ENCODE measurements at regions of chr9 and their contacts with region 1.

Region 1: DNA sequence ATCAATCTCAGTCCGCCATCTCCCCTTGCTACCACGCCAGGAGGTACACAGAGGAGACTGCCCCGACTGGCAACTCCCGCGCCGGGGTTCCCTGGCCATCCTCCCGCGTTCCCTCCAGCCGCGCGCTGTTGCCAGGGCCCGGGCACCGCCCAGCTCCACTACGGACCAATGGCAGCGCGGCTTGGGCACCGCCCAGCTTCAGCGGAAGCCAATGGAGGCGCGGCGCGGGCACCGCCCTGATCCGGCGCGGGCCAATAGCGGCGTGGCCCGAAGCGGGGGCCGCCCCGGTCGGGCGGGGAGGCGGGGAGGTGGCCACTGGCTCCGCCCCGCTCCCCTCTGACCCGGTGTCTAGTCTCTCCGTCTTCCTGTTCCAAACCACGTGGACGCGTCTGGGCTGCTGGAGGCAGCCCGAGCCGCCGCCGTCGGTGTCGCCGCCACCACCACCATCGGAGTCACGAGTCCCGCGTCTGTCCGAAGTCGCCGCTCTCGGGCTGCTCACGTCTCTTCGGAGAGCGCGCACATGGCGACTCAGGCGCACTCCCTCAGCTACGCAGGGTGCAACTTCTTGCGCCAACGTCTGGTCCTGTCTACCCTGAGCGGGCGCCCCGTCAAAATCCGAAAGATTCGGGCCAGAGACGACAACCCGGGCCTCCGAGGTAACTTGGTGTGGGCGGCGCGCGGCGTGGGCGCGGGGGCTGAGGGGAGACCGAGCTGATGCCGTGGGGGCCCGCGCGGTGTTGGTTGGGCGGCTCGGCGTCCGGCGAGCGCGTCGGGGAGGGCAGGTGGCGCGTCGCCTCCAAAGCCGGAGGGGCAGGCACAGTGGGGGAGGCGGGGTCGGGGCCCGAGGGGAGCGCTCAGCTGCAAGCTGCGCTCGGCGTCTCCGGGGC is at the start of gene RCL1:
- DNase-seq: peak; percentile 97
- ATAC-seq: peak; percentile 91
- H3K4me3 ChIP-seq: peak within 1 kb of the TSS; percentile 81 to 96 (median 94)
- H3K4me3 Mint-ChIP-seq: peak within 1 kb of the TSS; percentile 98
- H3K27ac ChIP-seq: peak within 1 kb of the TSS; percentile 89 to 97
- H3K27ac Mint-ChIP-seq: peak within 1 kb of the TSS; percentile 97
- H3K4me1 ChIP-seq: peaks cover 22 to 30% of the 10 kb centered on the region in 2 donors
- H3K4me1 Mint-ChIP-seq: peaks cover 36% of the 10 kb centered on the region
- H3K27me3 ChIP-seq: no peaks in the 10 kb centered on the region
- H3K27me3 Mint-ChIP-seq: peaks cover 1% of the 10 kb centered on the region
- CTCF ChIP-seq: no peak
- total RNA-seq, gene RCL1: 21.7 and 29.6 TPM in 2 replicates

Region 2: GRCh38 chr9:3525836-3526164 is 1267.0 kb before region 1 on chr9 and contains the start of gene RFX3:
- CTCF ChIA-PET with region 1: no interaction called
- POLR2A ChIA-PET with region 1: no interaction called
- intact Hi-C with region 1: loop called (anchors 5 kb)
- DNase-seq: peak; percentile 95
- ATAC-seq: peak; percentile 67
- H3K4me3 ChIP-seq: peak within 1 kb of the TSS; percentile 84 to 99 (median 95)
- H3K4me3 Mint-ChIP-seq: peak within 1 kb of the TSS; percentile 100
- H3K27ac ChIP-seq: peak within 1 kb of the TSS; percentile 100
- H3K27ac Mint-ChIP-seq: peak within 1 kb of the TSS; percentile 100
- H3K4me1 ChIP-seq: peaks cover 17 to 35% of the 10 kb centered on the region in 2 donors
- H3K4me1 Mint-ChIP-seq: peaks cover 48% of the 10 kb centered on the region
- H3K27me3 ChIP-seq: no peaks in the 10 kb centered on the region
- H3K27me3 Mint-ChIP-seq: no peaks in the 10 kb centered on the region
- CTCF ChIP-seq: no peak
- total RNA-seq, gene RFX3: 37.2 and 39.1 TPM in 2 replicates

Region 3: GRCh38 chr9:4679268-4680172 is 113.3 kb before region 1 on chr9 and contains the start of gene CDC37L1:
- CTCF ChIA-PET with region 1: no interaction called
- POLR2A ChIA-PET with region 1: interaction called, 7 read pairs
- intact Hi-C with region 1: loop called (anchors 1 kb)
- DNase-seq: peak; percentile 98
- ATAC-seq: peak; percentile 95
- H3K4me3 ChIP-seq: peak within 1 kb of the TSS; percentile 58 to 97 (median 72)
- H3K4me3 Mint-ChIP-seq: no peak within 1 kb of the TSS
- H3K27ac ChIP-seq: peak within 1 kb of the TSS; percentile 89 to 93
- H3K27ac Mint-ChIP-seq: no peak within 1 kb of the TSS
- H3K4me1 ChIP-seq: peaks cover 17 to 20% of the 10 kb centered on the region in 2 donors
- H3K4me1 Mint-ChIP-seq: peaks cover 3% of the 10 kb centered on the region
- H3K27me3 ChIP-seq: no peaks in the 10 kb centered on the region
- H3K27me3 Mint-ChIP-seq: no peaks in the 10 kb centered on the region
- CTCF ChIP-seq: peak; percentile 72
- total RNA-seq, gene CDC37L1: 16.0 and 19.3 TPM in 2 replicates

Region 4: DNA sequence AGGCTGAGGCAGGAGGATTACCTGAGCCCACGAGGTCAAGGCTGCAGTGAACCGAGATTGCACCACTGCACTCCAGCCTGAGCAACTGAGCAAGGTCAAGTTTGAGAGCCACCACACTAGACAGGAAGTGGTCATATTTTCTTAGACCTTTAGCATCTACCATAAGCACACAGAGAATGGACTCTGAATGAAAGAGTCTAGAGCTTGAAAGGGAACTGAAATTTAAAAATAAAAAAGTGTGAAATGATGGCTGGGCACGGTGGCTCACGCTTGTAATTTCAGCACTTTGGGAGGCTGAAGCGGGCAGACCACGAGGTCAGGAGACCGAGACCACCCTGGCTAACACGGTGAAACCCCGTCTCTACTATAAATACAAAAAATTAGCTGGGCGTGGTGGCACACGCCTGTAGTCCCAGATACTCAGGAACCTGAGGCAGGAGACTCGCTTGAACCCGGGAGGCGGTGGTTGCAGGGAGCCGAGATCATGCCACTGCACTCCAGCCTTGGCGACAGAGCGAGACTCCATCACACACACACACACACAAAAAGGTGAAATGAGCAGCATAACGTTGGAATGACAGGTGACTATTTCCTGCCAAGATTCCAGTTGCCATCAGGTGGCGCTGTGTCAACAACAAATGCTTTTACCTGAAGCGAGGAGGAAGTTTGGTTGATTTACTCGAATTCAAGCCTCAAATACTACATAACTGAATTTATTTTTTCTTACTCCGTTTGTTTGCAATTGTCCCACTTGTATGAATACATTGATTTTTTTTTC is 30.5 kb before region 1 on chr9:
- CTCF ChIA-PET with region 1: interaction called, 16 read pairs
- POLR2A ChIA-PET with region 1: interaction called, 3 read pairs
- intact Hi-C with region 1: loop called (anchors 1 kb)
- DNase-seq: peak; percentile 87
- ATAC-seq: peak; percentile 73
- H3K4me3 ChIP-seq: peak overlapping the region; percentile 22 to 62 (median 56)
- H3K4me3 Mint-ChIP-seq: peak overlapping the region; percentile 82
- H3K27ac ChIP-seq: peak overlapping the region in 1 of 2 donors; percentile 28
- H3K27ac Mint-ChIP-seq: peak overlapping the region; percentile 17
- H3K4me1 ChIP-seq: peaks cover 10 to 20% of the 10 kb centered on the region in 2 donors
- H3K4me1 Mint-ChIP-seq: peaks cover 22% of the 10 kb centered on the region
- H3K27me3 ChIP-seq: no peaks in the 10 kb centered on the region
- H3K27me3 Mint-ChIP-seq: no peaks in the 10 kb centered on the region
- CTCF ChIP-seq: peak; percentile 89

Region 5: GRCh38 chr9:4828761-4829160 is 35.9 kb after region 1 on chr9:
- CTCF ChIA-PET with region 1: no interaction called
- POLR2A ChIA-PET with region 1: no interaction called
- intact Hi-C with region 1: no loop called
- DNase-seq: no peak
- ATAC-seq: no peak
- H3K4me3 ChIP-seq: no peak overlapping the region
- H3K4me3 Mint-ChIP-seq: no peak overlapping the region
- H3K27ac ChIP-seq: no peak overlapping the region
- H3K27ac Mint-ChIP-seq: no peak overlapping the region
- H3K4me1 ChIP-seq: no peaks in the 10 kb centered on the region
- H3K4me1 Mint-ChIP-seq: no peaks in the 10 kb centered on the region
- H3K27me3 ChIP-seq: no peaks in the 10 kb centered on the region
- H3K27me3 Mint-ChIP-seq: no peaks in the 10 kb centered on the region
- CTCF ChIP-seq: no peak

Region 6: GRCh38 chr9:5042641-5043277 is 249.9 kb after region 1 on chr9:
- CTCF ChIA-PET with region 1: no interaction called
- POLR2A ChIA-PET with region 1: no interaction called
- intact Hi-C with region 1: no loop called
- DNase-seq: no peak
- ATAC-seq: no peak
- H3K4me3 ChIP-seq: peak overlapping the region in 1 of 5 experiments; percentile 43
- H3K4me3 Mint-ChIP-seq: peak overlapping the region; percentile 34
- H3K27ac ChIP-seq: no peak overlapping the region
- H3K27ac Mint-ChIP-seq: no peak overlapping the region
- H3K4me1 ChIP-seq: no peaks in the 10 kb centered on the region
- H3K4me1 Mint-ChIP-seq: peaks cover 5% of the 10 kb centered on the region
- H3K27me3 ChIP-seq: no peaks in the 10 kb centered on the region
- H3K27me3 Mint-ChIP-seq: no peaks in the 10 kb centered on the region
- CTCF ChIP-seq: no peak

Region 7: DNA sequence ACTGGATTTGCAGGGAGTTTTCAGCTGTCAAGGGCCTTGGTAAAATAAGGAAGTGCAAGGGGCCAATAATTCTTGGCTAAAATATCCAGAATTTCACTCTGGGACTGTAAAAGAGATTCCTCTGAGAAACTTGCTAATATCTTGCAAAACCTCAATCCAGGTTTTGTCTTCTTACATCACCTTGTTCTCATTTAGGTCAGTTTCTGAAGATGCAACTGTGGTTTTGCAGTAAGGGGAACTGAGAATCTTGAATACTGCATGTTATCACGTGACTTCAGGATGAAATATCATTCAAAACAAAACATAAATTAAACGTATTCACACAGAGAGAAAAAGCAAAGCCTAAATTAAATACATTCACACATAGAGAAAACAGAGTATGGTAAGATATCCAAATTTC is 801.1 kb after region 1 on chr9:
- CTCF ChIA-PET with region 1: no interaction called
- POLR2A ChIA-PET with region 1: no interaction called
- intact Hi-C with region 1: loop called (anchors 2 kb)
- DNase-seq: peak; percentile 84
- ATAC-seq: peak; percentile 57
- H3K4me3 ChIP-seq: no peak overlapping the region
- H3K4me3 Mint-ChIP-seq: peak overlapping the region; percentile 50
- H3K27ac ChIP-seq: peak overlapping the region in 1 of 2 donors; percentile 40
- H3K27ac Mint-ChIP-seq: peak overlapping the region; percentile 69
- H3K4me1 ChIP-seq: peaks cover 41 to 44% of the 10 kb centered on the region in 2 donors
- H3K4me1 Mint-ChIP-seq: peaks cover 68% of the 10 kb centered on the region
- H3K27me3 ChIP-seq: no peaks in the 10 kb centered on the region
- H3K27me3 Mint-ChIP-seq: no peaks in the 10 kb centered on the region
- CTCF ChIP-seq: no peak

Region 8: DNA sequence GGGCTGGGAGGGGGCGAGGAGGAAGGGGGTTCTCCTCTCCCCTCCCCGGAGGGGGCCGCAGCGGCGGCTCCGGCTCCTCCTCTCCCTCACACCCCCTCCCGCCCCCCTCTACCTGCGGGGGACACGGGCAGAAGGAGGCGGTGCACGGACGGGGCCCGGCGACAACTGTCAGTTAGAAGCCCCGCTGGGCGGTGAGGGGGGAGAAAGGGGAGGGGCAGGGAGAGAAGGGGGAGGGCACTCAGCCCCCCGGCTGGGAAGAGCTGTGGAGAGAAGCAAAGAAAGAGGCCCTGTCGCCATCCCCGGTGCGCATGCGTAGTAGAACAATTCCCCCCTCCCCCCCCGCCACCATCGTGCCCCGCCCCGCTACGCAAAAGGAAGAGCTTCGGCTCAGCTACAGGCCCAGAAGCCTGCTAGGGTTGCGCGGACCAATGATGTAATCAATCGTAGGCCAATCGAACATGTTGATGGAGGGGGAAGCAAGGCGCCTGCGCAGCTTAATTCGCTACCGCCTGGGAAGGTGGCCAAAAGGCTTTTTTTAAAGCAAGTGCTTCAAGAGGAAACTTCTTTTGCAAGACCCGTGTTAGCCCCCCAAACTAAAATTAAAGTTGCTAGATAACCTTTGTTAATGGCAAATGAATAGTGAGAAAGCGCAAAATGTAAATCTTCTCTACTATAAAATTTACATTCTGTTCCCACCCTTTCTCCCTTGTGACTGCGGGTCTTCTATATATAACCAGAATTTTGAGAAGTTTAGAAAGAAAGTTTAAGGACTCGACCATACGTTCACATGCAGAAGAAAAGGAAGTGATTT is 1215.6 kb after region 1 on chr9:
- CTCF ChIA-PET with region 1: no interaction called
- POLR2A ChIA-PET with region 1: no interaction called
- intact Hi-C with region 1: loop called (anchors 2 kb)
- DNase-seq: peak; percentile 97
- ATAC-seq: peak; percentile 72
- H3K4me3 ChIP-seq: peak overlapping the region; percentile 43 to 89 (median 73)
- H3K4me3 Mint-ChIP-seq: peak overlapping the region; percentile 95
- H3K27ac ChIP-seq: peak overlapping the region; percentile 86 to 91
- H3K27ac Mint-ChIP-seq: peak overlapping the region; percentile 89
- H3K4me1 ChIP-seq: peaks cover 17 to 21% of the 10 kb centered on the region in 2 donors
- H3K4me1 Mint-ChIP-seq: peaks cover 49% of the 10 kb centered on the region
- H3K27me3 ChIP-seq: no peaks in the 10 kb centered on the region
- H3K27me3 Mint-ChIP-seq: no peaks in the 10 kb centered on the region
- CTCF ChIP-seq: no peak